Activated naive CD4-positive, alpha-beta T cell treated with anti-CD3 and anti-CD28 coated beads for 36 hours (primary cell): ENCODE measurements at regions of chr9 and their contacts with region 1.

Region 1: GRCh38 chr9:131366761-131367401 is 27.0 kb upstream of the PRRC2B start:
- DNase-seq: peak; percentile 25
- H3K4me3 Mint-ChIP-seq: no peak overlapping the region
- H3K27ac Mint-ChIP-seq: no peak overlapping the region
- H3K4me1 Mint-ChIP-seq: peaks cover 3% of the 10 kb centered on the region
- H3K27me3 Mint-ChIP-seq: no peaks in the 10 kb centered on the region

Region 2: DNA sequence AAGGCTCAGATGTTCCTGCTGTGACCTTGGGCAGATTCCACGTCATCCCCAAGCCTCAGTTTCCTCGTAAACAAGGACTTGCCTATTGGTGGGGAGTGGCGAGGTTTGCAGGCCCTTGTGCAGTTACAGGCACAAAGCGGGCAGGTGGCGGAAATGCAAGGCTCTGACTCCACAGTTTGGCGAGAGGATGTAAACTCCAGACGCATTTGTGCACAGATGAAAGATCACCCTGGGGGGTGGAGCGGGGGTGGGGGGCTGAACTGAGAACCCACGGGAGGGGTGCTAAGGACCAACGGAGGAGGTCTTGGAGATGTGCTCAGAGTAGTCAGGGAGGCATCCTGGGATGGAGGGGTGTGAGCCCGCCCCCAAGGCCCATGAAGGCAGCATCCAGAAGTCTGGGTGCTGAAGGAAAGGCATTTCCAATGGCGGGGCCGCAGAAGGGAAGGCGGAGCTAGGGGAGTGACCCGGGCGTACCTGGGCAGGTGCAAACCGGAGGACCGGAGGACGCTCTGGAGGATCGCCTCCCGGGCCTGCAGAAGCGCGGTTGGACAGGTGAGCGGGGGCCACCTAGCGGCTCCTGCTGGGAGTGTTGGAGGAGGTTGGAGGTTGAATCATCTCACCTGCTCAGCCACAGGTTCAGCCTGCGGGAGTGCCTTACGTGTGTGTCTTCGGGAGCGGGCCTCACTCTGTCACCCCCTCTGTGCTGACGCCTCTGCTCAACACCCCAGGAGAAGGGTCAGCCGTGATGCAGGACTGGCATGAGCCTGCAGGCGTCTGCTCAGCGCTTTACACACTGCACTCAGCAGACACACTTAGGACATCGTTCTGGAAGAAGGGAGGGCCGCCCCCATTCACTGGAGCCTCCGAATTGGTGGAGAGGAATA is 425.9 kb before region 1 on chr9:
- CTCF ChIA-PET with region 1: no interaction called
- intact Hi-C with region 1: no loop called
- DNase-seq: peak; percentile 87
- H3K4me3 Mint-ChIP-seq: no peak overlapping the region
- H3K27ac Mint-ChIP-seq: no peak overlapping the region
- H3K4me1 Mint-ChIP-seq: peaks cover 10% of the 10 kb centered on the region
- H3K27me3 Mint-ChIP-seq: peaks cover 52% of the 10 kb centered on the region

Region 3: GRCh38 chr9:131310833-131311554 is 55.9 kb before region 1 on chr9:
- CTCF ChIA-PET with region 1: no interaction called
- intact Hi-C with region 1: no loop called
- DNase-seq: peak; percentile 89
- H3K4me3 Mint-ChIP-seq: peak overlapping the region; percentile 39
- H3K27ac Mint-ChIP-seq: no peak overlapping the region
- H3K4me1 Mint-ChIP-seq: peaks cover 12% of the 10 kb centered on the region
- H3K27me3 Mint-ChIP-seq: no peaks in the 10 kb centered on the region

Region 4: GRCh38 chr9:131407717-131408195 is 40.9 kb after region 1 on chr9:
- CTCF ChIA-PET with region 1: no interaction called
- intact Hi-C with region 1: loop called (anchors 5 kb)
- DNase-seq: peak; percentile 65
- H3K4me3 Mint-ChIP-seq: peak overlapping the region; percentile 56
- H3K27ac Mint-ChIP-seq: peak overlapping the region; percentile 75
- H3K4me1 Mint-ChIP-seq: peaks cover 87% of the 10 kb centered on the region
- H3K27me3 Mint-ChIP-seq: no peaks in the 10 kb centered on the region